A673 (cell line): ENCODE measurements at regions of chr11 and their contacts with region 1.

Region 1: DNA sequence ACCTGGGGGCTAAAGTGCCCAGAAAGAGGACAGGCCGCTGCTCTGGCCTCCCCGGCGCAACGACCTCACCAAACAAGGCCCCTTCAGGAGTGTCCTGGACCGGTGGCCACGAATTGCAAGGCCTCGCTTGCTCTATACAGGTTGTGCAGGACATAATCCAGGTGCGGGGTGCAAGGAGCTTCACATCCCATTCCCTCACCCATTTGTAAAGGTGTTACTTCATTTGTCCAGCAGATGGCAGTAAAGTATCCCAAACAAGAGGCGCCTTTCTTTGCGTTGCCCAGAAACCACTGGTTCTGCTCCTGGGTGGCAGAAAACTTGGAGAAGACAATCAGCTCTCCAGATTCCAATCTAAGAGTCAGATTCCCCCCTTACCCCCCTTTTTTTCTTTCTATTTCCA is 35.9 kb upstream of the PRDM11 start:
- DNase-seq: peak; percentile 92
- H3K4me3 ChIP-seq: no peak overlapping the region
- H3K27ac ChIP-seq: no peak overlapping the region
- H3K4me1 ChIP-seq: no peaks in the 10 kb centered on the region
- H3K27me3 ChIP-seq: peaks cover 12% of the 10 kb centered on the region
- CTCF ChIP-seq: peak; percentile 91

Region 2: DNA sequence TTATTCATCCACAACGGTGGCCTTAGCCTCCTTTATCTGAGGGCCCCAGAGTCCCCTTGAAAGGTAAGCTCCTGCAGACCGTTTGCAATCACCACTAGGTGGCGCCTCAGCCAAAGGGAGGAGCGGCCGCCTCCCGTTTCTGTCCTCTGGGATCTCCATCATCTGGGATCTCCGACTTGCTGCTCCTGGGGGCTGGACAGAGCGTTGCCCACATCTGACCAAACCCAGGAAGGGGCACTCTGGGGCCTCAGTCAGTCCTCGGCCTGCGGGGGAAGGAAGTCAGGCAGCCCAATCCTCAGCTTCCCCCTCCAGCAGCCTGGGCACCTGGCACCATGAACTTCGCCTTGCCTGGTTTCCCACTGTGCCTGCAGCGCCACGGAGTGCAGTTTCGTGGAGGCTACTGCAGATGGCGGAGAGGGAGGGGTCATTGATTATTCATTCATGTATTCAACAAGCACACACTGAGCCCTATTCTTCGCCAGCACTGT is 183.3 kb before region 1 on chr11:
- CTCF ChIA-PET with region 1: interaction called, 141 read pairs
- POLR2A ChIA-PET with region 1: no interaction called
- intact Hi-C with region 1: loop called (anchors 1 kb)
- DNase-seq: peak; percentile 92
- H3K4me3 ChIP-seq: no peak overlapping the region
- H3K27ac ChIP-seq: no peak overlapping the region
- H3K4me1 ChIP-seq: peaks cover 5% of the 10 kb centered on the region
- H3K27me3 ChIP-seq: no peaks in the 10 kb centered on the region
- CTCF ChIP-seq: peak; percentile 100

Region 3: GRCh38 chr11:45285930-45286632 is 175.5 kb after region 1 on chr11 and contains the start of gene SYT13:
- CTCF ChIA-PET with region 1: interaction called, 11 read pairs
- POLR2A ChIA-PET with region 1: no interaction called
- intact Hi-C with region 1: no loop called
- DNase-seq: no peak
- H3K4me3 ChIP-seq: peak within 1 kb of the TSS; percentile 12
- H3K27ac ChIP-seq: no peak within 1 kb of the TSS
- H3K4me1 ChIP-seq: no peaks in the 10 kb centered on the region
- H3K27me3 ChIP-seq: peaks cover 71% of the 10 kb centered on the region
- CTCF ChIP-seq: no peak
- total RNA-seq, gene SYT13: 0.30 and 0.83 TPM in 2 replicates

Region 4: GRCh38 chr11:45319077-45319476 is 208.5 kb after region 1 on chr11:
- CTCF ChIA-PET with region 1: interaction called, 10 read pairs
- POLR2A ChIA-PET with region 1: no interaction called
- intact Hi-C with region 1: no loop called
- DNase-seq: no peak
- H3K4me3 ChIP-seq: no peak overlapping the region
- H3K27ac ChIP-seq: no peak overlapping the region
- H3K4me1 ChIP-seq: no peaks in the 10 kb centered on the region
- H3K27me3 ChIP-seq: peaks cover 9% of the 10 kb centered on the region
- CTCF ChIP-seq: no peak

Region 5: DNA sequence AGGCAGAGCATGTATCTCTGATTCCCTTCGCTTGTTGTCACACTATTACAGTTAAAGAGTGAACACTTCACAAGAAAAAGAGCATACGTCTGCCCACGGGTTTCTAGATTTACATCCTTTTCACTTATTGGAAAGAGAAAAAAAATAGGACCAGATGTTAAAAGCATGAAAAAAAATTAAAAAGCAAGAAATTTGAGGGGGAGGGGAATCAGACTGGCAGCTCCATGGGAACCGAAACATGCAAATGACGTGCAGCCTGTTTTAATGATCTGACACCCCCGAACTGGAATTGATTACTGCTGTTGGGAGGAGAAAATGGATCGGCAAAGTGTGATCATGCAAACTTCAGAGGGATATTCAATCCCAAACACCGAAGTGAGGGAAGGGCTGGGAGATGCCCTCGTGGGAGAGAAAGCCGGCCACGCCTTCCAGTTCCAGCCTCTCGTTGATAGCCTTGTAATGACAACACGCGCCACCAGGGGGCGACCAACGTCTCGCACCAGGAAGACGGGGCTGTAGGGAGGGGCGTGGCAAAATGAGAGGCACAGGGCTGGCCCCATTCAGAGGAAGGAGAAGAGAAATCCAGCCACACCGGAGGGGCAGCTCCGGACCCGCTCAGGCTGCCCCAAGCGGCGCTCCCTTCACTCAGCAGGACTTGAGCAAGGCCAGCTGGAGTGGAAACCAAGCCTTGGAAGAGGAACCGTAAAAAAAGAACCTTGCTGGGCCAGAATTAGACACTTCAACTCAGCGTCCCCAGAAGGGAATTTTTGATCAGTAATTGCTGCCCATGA is 229.4 kb after region 1 on chr11:
- CTCF ChIA-PET with region 1: interaction called, 11 read pairs
- POLR2A ChIA-PET with region 1: no interaction called
- intact Hi-C with region 1: no loop called
- DNase-seq: peak; percentile 98
- H3K4me3 ChIP-seq: peak overlapping the region; percentile 15
- H3K27ac ChIP-seq: no peak overlapping the region
- H3K4me1 ChIP-seq: peaks cover 17% of the 10 kb centered on the region
- H3K27me3 ChIP-seq: no peaks in the 10 kb centered on the region
- CTCF ChIP-seq: peak; percentile 100

Region 6: DNA sequence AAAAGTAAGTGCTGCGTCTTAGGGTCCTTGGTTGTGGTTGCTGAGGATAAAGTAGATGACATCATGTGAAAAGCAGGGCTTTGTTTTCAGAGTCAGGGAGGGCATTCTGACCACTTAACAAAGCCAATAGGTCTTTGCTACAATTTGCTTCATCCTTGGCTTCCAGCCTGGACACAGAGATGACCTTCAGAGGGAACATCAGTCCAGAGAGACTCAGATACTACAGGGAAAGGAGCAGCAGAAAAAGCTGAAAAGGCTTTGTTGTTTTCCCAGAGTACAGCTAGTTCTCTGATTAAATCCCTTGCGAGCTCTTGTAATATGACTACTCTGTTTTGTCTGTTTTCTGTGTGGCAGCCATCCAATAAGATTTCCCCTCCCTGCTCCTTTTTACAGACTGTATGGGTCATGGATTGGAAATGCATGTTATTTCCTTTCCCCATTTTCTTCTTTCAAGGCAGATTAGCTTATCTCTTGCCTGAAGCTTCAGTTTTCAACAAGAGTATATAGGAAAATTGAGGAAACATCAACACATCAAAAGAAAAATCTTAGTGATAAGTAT is 1538.7 kb after region 1 on chr11:
- CTCF ChIA-PET with region 1: no interaction called
- POLR2A ChIA-PET with region 1: no interaction called
- intact Hi-C with region 1: no loop called
- DNase-seq: peak; percentile 98
- H3K4me3 ChIP-seq: no peak overlapping the region
- H3K27ac ChIP-seq: peak overlapping the region; percentile 83
- H3K4me1 ChIP-seq: peaks cover 21% of the 10 kb centered on the region
- H3K27me3 ChIP-seq: no peaks in the 10 kb centered on the region
- CTCF ChIP-seq: no peak